Left lung (tissue), 14 donors: ENCODE measurements at regions of chr17 and their contacts with region 1.

Region 1: DNA sequence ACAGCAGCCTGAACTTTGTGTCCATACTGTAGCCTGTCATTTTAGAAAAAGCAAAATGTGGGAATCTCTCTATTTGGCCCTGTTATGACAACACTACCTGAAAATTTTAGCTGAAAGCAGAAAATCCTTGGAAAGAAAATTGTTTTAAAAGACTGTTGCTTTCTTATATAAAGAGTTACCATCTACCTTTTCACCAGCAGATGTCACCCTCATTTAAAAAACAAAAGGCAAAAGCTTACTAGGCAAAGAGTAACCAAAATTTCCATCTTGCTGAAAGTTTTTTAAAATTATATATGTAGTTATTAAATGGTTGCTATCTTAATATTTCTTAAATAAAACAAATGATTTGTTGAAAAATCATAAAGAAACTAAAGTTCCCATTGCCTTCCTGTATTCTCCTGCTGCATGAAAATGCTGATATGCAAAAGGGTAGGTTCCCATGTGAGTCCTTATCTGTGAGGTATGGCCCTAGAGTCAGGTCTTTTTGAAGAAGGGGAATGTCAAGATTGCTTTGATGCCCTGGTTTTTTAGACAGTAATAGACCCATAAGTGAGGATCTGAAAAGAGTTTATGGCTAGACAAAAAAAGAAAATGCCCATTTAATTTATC is 61.0 kb downstream of the TNRC6C start:
- DNase-seq: peak in 1 of 4 donors; percentile 60
- ATAC-seq: peak; percentile 59
- H3K4me3 ChIP-seq: no peak overlapping the region
- H3K27ac ChIP-seq: no peak overlapping the region
- H3K4me1 ChIP-seq: no peaks in the 10 kb centered on the region
- H3K27me3 ChIP-seq: no peaks in the 10 kb centered on the region
- CTCF ChIP-seq: peak; percentile 32 to 47

Region 2: GRCh38 chr17:77546772-77547241 is 472.7 kb before region 1 on chr17:
- intact Hi-C with region 1: loop called in 1 of 2 experiments (anchors 5 kb)
- DNase-seq: peak in 2 of 4 donors; percentile 31 to 65
- ATAC-seq: no peak
- H3K4me3 ChIP-seq: no peak overlapping the region
- H3K27ac ChIP-seq: no peak overlapping the region
- H3K4me1 ChIP-seq: peaks cover 0 to 4% of the 10 kb centered on the region in 2 donors
- H3K27me3 ChIP-seq: peaks cover 0 to 20% of the 10 kb centered on the region in 2 donors
- CTCF ChIP-seq: no peak

Region 3: DNA sequence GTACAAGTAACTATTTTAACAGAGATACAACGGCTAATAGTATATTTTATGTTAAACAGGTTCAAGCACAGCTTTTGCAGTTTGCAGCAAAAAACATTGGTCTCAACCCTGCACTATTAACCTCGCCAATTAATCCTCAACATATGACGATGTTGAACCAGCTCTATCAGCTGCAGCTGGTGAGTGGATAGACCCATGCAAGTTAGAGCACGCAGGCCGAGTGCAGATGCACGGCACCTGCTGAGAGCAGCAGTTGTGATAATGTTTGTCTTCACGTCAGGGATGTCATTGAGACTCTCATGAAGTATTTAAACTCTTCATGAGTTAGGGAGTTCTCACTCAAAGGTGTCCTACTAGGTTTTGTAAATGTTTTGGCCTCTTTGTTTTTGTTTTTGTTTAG is 63.5 kb after region 1 on chr17:
- intact Hi-C with region 1: no loop called
- DNase-seq: no peak
- ATAC-seq: no peak
- H3K4me3 ChIP-seq: no peak overlapping the region
- H3K27ac ChIP-seq: no peak overlapping the region
- H3K4me1 ChIP-seq: no peaks in the 10 kb centered on the region
- H3K27me3 ChIP-seq: no peaks in the 10 kb centered on the region
- CTCF ChIP-seq: no peak